ENCODE measurements at regions of chr1 and their contacts with region 1.

Region 1: DNA sequence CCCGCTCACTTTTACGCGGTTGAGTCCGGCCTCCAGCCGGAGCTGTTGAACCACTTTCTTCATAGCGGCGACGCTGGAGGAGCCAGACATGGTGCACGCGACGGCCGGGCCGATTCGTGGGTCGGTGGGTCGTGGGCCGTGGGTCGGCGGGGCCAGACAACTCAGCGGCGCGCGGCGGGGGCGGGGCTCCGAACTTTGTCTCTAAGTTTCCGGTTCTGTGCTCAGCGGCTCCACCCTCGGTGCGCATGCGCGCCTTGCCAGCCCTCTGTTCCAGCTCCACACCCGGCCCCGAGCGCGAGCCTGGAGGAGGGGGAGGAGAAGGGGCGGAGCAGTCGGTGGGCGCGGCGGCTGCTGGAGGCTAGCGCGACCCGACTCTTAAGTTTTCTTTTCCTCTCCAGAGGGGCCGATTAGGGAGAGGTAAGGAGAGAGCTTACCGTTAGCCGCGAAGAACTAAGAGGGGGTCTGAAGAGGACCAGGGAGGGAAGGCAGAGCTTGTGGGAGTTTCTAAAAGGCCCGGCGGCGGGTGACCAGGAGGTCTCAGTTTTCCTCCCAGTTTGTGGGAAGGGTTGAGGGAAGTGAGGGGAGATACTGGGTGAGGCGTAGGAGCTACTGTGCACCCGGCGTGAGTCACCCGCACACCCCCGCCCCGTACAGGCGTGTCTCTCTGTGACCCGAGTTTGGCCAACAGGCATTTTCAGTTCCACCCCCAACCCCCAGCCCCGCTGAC is at the starts of genes GNG5 and SPATA1:
- DNase-seq: peak; percentile 95 to 99
- H3K4me3 ChIP-seq: peak within 1 kb of the TSS; percentile 88 to 94
- H3K27ac ChIP-seq: peak within 1 kb of the TSS; percentile 95 to 99
- H3K4me1 ChIP-seq: peaks cover 0 to 15% of the 10 kb centered on the region in 2 donors
- H3K27me3 ChIP-seq: no peaks in the 10 kb centered on the region
- CTCF ChIP-seq: no peak
- total RNA-seq, gene GNG5: 119 TPM
- total RNA-seq, gene SPATA1: not detected

Region 2: DNA sequence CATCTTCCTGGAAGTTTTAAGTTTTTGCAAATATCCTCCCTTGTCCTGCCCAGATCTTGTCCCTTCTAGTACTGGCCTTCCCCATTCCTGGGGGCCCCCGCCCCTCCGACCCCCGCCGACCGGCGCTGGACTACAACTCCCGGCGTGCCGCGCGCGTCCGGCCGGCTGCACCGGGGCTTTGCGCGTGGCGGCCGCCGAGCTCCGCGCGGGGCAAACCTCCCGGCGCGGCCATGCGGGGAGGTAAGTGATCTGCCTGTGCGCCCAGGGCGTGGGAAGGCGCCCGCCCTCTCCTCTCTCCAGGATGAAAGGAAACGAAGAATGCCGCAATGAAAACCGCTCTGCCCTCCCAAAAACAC is 207.9 kb before region 1 on chr1:
- intact Hi-C with region 1: loop called (anchors 5 kb)
- DNase-seq: peak in 1 of 2 donors; percentile 82
- H3K4me3 ChIP-seq: peak overlapping the region; percentile 79 to 89
- H3K27ac ChIP-seq: peak overlapping the region; percentile 84 to 90
- H3K4me1 ChIP-seq: peaks cover 0 to 15% of the 10 kb centered on the region in 2 donors
- H3K27me3 ChIP-seq: no peaks in the 10 kb centered on the region
- CTCF ChIP-seq: no peak

Region 3: DNA sequence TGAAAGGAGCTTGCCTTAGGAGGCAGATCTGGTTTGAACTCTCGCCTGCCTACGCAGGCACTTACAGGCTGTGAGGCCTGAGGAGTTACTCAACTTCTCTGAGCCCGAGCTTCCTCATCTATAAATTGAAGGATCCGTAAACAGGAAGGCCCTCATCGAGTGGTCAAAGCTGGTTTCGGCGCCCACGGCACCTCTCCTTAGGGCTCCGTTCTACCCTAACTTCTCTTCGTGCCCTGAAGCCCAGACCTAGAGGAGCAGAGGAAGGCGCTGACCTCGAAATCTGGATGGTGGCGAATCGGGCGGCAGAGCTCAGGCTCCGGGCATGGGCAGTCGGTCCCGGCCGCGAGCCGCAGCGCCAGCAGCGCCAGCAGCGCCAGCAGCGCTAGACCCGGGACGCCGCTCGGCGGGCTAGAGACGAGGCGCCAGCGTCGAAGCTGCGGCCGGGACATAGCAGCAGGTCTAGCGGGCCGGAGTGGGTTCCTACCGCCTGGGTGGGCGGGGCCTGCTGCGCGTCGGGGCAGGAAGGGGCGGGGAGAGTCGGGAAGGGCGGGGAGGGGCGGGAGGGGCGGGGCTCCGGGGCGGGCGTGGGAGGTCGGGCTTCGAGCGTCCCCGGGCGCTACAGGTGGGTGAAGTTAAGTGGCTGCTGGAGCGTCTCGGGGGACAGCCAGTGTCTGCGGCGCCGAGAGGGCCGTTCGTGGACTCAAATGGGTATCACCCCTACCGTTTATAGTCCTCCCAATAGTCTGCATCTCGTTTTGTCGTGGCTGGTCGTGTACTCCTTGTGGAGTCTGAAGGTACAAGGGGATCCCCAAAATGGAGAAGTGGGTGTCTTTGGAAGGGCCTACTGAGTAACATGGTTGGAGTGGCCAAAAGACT is 68.0 kb after region 1 on chr1 and contains the start of gene CTBS:
- intact Hi-C with region 1: loop called (anchors 1 kb)
- DNase-seq: peak; percentile 33 to 91
- H3K4me3 ChIP-seq: peak within 1 kb of the TSS; percentile 87 to 89
- H3K27ac ChIP-seq: peak within 1 kb of the TSS; percentile 99 to 100
- H3K4me1 ChIP-seq: peaks cover 3 to 13% of the 10 kb centered on the region in 2 donors
- H3K27me3 ChIP-seq: no peaks in the 10 kb centered on the region
- CTCF ChIP-seq: no peak
- total RNA-seq, gene CTBS: 14.5 TPM

Region 4: DNA sequence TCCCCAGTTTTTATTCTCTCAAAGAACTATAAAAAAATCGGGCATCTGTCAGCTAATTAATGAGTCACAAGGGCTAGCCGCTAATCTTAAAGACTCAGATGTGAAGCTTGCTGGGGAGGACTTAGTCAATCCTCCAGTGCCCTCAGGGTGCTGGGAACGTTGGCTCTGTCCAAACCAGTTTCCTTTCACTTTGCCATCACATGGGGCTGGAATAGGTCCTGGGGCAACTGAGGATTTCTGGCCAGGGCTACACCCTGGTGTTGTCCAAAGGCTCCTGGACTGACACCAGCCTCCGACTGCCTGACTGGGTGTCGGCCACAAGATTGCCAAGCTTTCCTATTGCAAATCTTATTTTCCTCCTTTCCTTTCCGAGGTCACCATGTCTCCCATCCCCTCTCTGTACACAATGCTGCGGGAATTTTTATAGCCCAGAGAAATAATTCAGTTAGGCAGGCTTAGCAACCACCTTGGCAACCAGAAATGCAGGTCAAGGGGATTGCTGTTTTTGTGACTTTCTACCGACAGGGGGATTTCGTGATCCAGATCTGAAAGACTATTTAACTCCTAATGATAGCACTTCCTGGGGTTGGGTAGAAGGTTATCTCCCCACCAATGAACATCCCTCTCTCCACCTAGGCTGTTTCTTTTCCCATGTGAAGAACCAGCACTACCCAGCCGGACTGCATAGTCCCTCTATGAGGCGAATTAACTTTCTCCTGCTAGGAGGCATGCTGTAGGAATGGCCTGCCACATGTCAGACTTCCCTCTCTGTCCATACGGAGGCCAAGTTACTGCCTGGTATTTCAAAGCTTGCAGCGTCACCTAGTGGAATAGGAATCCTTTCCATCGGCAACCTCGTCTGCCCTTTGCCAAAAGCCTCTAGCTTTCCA is 98.0 kb after region 1 on chr1:
- intact Hi-C with region 1: loop called (anchors 1 kb)
- DNase-seq: peak; percentile 52 to 83
- H3K4me3 ChIP-seq: peak overlapping the region; percentile 49 to 55
- H3K27ac ChIP-seq: peak overlapping the region; percentile 87 to 94
- H3K4me1 ChIP-seq: peaks cover 3 to 11% of the 10 kb centered on the region in 2 donors
- H3K27me3 ChIP-seq: no peaks in the 10 kb centered on the region
- CTCF ChIP-seq: peak; percentile 68 to 81 (median 77)

Region 5: DNA sequence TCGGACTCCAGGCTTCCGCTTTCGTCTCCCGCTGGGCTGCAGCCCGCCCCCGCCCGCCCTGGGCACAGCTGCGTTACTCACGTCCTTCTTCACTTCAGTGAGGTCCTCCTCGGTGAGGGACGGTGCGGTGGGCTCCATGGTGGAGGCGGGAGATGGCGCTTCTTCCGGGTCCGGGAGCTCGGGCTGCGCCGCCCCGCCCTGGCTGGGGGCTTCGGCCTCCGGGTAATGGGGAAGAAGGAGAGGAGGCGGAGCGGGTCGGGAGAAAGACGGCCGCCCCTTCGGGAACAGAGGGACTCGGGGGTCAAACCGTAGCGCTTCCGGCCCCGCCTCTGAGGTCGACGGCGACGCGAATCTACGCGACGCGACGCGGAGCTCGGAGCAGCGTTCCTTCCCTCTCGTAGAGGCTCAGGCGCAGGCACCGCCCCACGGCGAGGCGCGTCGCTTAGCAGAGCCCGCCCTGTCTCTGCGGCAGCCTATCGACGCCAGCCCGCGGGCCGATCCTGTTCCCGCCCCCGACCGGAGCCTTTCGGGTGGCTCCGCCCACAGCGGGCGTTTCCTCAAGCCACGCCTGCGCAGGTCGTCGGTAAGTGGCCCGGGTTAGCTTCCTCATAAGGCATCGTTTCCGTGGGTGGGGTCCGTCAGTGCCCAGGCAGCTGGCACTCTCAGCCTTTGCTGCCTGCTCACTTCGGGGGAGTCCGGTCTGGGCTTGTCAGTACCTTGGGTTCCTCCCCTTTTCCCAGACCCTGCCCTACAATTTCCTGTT is 770.2 kb after region 1 on chr1 and contains the start of gene BCL10:
- intact Hi-C with region 1: loop called (anchors 10 kb)
- DNase-seq: peak; percentile 95 to 99
- H3K4me3 ChIP-seq: peak within 1 kb of the TSS; percentile 75 to 82
- H3K27ac ChIP-seq: peak within 1 kb of the TSS; percentile 93 to 97
- H3K4me1 ChIP-seq: peaks cover 8 to 17% of the 10 kb centered on the region in 2 donors
- H3K27me3 ChIP-seq: no peaks in the 10 kb centered on the region
- CTCF ChIP-seq: no peak
- total RNA-seq, gene BCL10: 3.7 TPM

Measured in ascending aorta (tissue), 2 donors.